AG04449 (cell line): ENCODE measurements at regions of chr1 and their contacts with region 1.

Region 1: DNA sequence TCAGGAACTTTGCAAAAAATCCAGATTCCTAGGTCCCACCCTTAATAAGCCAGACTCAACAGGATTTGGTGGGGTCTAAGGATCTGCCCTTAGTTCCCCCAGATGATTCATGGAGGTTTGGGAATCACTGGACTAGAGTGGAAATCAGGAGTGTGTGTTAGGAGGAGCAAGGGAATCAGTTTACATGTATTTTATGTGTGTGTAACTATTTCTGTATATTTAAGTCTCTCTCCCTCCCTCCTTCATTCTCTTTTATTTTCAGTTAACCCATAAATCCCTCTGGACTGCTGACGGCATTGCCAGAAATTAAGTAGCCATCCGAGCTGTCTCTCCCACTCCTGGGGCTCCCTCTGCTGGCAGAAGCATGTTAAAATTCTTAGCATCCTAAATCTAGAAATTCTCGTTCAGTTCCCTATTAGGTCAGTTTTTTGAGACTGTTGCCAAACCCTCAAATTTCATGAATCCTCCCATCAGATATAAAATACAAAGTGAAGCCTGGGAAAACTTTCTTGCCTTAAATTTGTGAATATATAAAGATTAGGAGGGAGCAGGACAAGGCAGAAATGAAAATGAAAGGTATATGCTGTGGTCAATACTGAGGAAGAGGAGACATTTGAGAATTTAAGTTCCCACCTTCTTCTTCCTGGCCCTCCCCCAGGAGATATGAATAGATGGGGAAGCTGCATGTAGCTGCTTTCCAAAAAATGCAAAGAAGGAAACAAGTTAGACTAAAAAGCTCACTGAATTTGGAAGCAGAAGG is 11.7 kb upstream of the HSD11B1 start:
- DNase-seq: peak; percentile 50
- H3K4me3 ChIP-seq: no peak overlapping the region
- CTCF ChIP-seq: peak; percentile 69

Region 2: GRCh38 chr1:209505044-209505443 is 187.9 kb before region 1 on chr1:
- CTCF ChIA-PET with region 1: no interaction called
- POLR2A ChIA-PET with region 1: no interaction called
- DNase-seq: no peak
- H3K4me3 ChIP-seq: no peak overlapping the region
- CTCF ChIP-seq: no peak

Region 3: DNA sequence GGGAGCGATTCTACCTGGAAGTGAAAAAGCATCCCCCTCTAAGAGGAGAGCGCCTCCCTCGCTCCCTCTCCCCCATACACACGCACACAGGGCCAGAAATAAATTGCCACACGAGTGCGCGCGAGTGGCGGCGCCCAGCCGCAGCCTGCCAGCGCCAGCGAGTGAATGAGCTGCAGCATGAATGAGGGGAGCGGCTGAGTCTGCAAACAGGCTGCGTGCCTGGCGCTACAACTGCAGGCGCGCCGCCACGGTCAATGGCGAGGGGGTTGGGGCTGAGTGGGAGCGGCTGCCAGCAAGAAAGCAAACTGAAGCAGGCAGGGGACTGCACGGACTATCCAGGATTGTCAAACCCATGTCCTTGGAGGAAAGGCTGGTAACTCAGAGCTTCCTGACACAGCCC is 107.3 kb before region 1 on chr1:
- CTCF ChIA-PET with region 1: interaction called, 37 read pairs
- POLR2A ChIA-PET with region 1: no interaction called
- DNase-seq: no peak
- H3K4me3 ChIP-seq: peak overlapping the region; percentile 33
- CTCF ChIP-seq: no peak

Region 4: GRCh38 chr1:209627732-209628196 is 65.2 kb before region 1 on chr1:
- CTCF ChIA-PET with region 1: interaction called, 10 read pairs
- POLR2A ChIA-PET with region 1: no interaction called
- DNase-seq: no peak
- H3K4me3 ChIP-seq: no peak overlapping the region
- CTCF ChIP-seq: peak; percentile 97

Region 5: DNA sequence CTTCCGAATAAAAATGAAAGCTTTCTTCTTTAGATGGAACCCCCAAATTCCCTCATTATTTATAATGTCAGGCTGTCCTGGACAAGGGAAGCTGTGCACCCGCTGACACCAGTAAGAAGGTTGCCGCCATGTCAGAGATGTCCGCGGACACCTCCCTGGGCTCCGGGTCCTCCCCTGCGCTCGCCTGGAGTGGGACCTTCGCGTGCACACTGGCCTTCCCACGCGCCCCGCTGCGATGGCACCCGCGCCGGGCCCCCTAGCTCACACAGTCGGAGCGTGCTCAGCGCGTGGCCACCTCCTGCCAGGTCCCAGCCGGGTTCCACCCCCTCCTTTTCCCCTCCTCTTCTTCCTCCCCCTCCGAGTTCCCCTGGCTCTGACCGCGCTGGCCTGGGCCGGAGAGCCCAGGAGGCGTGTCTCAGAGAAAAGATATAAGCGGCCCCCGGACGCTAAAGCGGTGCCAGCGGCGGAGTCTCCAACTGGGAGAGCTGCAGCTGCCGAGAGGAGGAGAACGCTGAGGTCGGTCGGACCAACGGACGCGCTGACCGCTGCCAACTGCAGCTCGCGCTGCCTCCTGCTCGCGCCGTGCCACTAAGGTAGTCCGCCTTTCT is 17.9 kb before region 1 on chr1 and contains the start of gene G0S2:
- CTCF ChIA-PET with region 1: interaction called, 29 read pairs
- POLR2A ChIA-PET with region 1: no interaction called
- DNase-seq: no peak
- H3K4me3 ChIP-seq: peak within 1 kb of the TSS; percentile 58
- CTCF ChIP-seq: no peak

Region 6: GRCh38 chr1:209747580-209748262 is 54.8 kb after region 1 on chr1:
- CTCF ChIA-PET with region 1: interaction called, 13 read pairs
- POLR2A ChIA-PET with region 1: no interaction called
- DNase-seq: no peak
- H3K4me3 ChIP-seq: peak overlapping the region; percentile 45
- CTCF ChIP-seq: peak; percentile 79

Region 7: DNA sequence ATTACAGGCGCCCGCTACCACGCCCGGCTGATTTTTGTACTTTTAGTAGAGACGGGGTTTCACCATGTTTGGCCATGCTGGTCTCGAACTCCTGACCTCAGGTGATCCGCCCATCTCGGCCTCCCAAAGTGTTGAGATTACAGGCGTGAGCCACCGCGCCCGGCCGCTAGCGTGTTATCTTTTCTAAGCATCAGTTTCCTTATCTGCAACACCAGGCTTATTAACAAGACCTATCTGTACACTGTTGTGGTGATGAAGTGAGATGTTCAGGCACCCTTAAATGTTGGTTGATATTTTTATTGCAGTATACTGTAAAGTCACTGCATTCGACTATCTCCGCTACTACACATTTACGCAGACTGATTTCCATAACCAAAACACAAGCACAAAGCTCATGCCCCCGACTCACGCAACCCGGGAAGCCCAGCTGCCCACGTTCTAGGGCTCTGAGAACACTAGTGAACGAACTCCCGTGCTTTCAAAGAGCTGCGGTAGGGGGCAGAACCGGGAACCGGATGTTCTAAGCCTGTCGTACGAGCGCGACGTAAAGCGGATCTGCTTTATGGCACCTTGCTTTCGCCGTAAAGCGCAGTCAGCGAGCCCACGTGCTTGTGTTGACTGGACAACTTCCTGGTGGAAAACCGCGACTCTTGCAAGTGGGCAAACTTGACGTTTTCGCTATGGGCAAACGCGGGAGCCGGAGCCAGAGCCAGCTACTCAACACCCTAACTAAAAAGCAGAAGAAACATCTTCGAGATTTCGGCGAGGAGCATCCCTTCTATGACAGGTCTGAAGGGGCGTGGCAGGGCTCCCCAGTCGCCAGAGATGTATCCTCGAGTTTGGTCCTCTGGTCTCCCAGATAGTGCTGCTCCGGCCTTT is 134.7 kb after region 1 on chr1 and contains the start of gene UTP25:
- CTCF ChIA-PET with region 1: no interaction called
- POLR2A ChIA-PET with region 1: no interaction called
- DNase-seq: peak; percentile 84
- H3K4me3 ChIP-seq: peak within 1 kb of the TSS; percentile 81
- CTCF ChIP-seq: peak; percentile 68